ENCODE measurements at regions of chr12 and their contacts with region 1.

Region 1: DNA sequence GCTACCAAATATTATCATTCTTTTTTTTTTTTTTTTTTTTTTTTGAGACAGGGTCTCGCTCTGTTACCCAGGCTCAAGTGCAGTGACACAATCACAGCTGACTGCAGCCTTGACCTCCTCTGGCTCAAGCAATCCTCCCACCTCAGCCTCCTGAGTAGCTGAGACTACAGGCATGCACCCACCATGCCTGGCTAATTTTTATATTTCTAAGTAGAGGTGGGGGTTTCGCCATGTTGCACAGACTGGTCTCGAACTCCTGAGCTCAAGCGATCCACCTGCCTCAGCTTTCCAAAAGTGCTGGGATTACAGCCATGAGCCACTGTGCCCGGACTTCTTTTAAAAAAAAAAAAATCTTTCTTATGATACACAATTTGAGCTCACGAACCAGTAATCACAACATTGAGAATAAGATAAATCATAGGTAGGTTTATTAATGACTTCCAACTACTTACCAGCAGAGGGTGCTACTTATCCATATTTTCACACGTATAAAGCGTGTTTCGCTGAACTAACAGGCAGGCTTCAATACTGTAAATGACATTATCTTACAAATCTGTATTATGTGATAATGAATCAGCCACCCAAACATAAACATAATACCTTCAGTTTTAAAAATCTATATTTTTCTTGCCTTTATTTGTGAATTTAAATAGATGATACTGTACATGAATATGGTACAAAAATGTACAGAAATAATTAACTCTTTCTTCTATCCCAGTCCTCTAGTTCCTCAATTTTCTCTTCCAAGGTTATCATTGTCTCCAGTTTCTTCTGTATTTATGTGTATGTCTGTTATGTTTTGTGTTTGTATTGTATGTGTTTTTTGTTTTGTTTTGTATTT is 42.5 kb upstream of the BCAT1 start:
- DNase-seq: no peak
- ATAC-seq: peak; percentile 66

Region 2: DNA sequence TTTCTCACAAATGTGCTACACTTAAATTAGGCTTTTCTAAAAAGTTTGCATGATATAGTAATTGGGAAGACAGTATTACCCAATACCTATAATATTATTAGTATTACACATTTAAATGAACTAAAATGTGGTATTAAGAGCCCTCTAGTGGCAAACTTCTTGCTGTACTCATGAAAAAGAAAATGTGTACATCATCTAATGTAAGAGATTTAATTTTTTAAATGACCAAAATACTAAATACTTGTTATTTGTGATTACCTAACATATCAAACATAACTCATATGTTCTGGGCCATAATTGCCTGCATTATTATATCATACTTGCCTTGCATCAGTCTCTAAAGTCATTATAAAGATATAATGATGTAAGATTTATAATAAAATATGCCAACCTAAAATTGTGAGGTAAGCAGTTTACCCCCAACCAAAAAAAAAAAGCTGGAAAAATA is 139.3 kb after region 1 on chr12:
- intact Hi-C with region 1: loop called (anchors 5 kb)
- DNase-seq: no peak
- ATAC-seq: no peak

Measured in left ventricle myocardium superior (tissue), 1 donor.